SK-N-SH (cell line): ENCODE measurements at regions of chr1 and their contacts with region 1.

Region 1: DNA sequence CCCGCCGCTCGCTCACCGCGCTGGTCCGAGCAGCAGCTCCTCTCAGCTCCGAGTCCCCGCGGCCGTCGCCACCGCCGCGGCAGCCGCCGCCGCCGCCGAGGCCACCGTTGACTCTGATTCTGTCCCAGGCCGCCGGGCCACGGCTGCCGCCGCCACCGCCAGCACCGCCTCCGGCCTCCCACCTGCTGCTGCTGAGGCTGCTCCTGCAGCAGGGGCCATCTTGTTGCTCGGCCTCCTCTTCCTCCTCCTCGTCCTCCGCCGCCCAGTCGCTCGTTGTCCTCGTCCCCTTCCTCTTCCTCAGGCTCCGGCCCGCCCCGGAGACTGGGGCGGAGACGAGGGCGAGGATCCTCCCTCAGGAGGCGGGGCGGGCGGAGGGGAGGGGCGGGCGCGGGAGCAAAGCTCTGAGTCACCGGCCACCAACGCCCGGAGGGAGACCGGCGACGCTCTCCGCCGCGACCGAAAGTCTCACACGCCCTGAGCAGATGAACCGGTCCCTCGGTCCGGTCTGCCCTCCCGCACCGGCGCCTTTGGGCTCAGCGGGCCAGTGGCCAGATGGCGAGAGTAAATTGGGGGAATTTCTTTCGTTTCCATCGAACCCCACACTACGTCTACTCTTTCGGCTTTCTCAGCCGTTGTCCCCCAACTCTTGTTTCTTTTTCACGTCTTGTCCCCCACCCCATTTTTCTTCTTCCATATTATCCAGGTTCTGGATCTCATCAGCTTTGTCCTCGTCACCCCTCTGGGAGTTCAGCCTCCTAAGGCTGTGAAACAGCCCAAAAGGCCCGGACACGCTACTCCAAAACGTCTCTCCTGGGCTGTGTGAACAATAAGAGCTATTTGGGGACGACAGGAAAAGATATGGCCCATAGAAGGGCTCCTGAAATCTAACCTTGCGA is at the start of gene RC3H1:
- DNase-seq: peak; percentile 95
- H3K4me3 ChIP-seq: peak within 1 kb of the TSS; percentile 81 to 84
- H3K27ac ChIP-seq: peak within 1 kb of the TSS; percentile 91 to 95
- H3K4me1 ChIP-seq: peaks cover 1 to 35% of the 10 kb centered on the region in 2 experiments; a peak in 2 of 4 replicates
- H3K27me3 ChIP-seq: no peaks in the 10 kb centered on the region
- CTCF ChIP-seq: no peak
- EP300 ChIP-seq: no peak
- RAD21 ChIP-seq: no peak
- polyA plus RNA-seq, gene RC3H1: 2.9 and 3.3 TPM in 2 replicates

Region 2: DNA sequence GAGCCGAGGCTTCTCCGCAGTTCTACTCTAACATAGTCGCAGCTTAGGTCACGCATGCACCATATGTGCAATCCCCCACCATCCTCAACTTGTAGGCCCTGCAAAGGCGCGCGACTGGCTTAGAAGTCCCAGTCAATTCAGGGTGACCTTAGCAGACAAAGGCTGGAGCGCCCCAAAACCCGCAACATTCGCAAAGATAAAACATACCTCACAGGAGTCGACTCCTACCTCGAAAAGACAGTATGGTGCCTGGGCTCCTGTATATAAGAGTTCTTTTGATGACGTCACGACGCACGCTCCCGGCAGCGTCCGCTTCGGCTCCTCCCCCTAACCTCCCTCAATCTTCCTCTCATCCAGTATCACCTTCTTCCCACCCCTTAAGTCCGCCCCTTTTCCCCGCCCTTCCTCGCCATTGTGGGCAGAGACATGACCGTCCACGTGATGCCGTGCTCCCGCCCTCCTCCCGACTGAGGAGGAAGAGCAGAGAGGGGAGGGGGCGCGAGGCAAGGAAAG is 154.5 kb before region 1 on chr1 and contains the start of gene GAS5:
- CTCF ChIA-PET with region 1: interaction called, 3 read pairs
- POLR2A ChIA-PET with region 1: interaction called, 14 read pairs
- DNase-seq: no peak
- H3K4me3 ChIP-seq: peak within 1 kb of the TSS; percentile 82 to 90
- H3K27ac ChIP-seq: peak within 1 kb of the TSS; percentile 74 to 97
- H3K4me1 ChIP-seq: peaks cover 11 to 38% of the 10 kb centered on the region in 2 experiments; a peak in 3 of 4 replicates
- H3K27me3 ChIP-seq: no peaks in the 10 kb centered on the region
- CTCF ChIP-seq: no peak
- EP300 ChIP-seq: no peak
- RAD21 ChIP-seq: no peak
- polyA plus RNA-seq, gene GAS5: 961 and 1,422 TPM in 2 replicates

Region 3: DNA sequence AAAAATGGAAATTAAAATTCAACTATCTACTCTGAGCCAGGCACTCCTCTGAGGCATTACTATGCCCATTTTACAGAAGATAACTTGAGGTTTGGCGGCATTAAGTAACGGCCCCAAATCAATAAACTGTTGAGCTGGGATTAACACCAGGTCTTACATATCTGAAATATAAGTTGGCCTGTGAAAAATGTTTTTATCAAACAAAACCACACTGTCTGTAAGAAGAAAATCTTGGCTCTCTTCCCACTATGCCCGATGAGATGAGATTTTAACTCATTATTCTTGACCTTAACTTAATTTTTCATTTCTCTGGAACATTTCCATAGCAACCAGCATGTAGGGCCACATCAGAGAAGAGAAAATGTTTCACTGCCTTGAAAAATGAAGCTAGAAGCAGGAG is 22.0 kb before region 1 on chr1:
- CTCF ChIA-PET with region 1: no interaction called
- POLR2A ChIA-PET with region 1: interaction called, 11 read pairs
- DNase-seq: peak; percentile 70
- H3K4me3 ChIP-seq: no peak overlapping the region
- H3K27ac ChIP-seq: peak overlapping the region; percentile 84 to 85
- H3K4me1 ChIP-seq: peaks cover 10 to 36% of the 10 kb centered on the region in 2 experiments; a peak in 3 of 4 replicates
- H3K27me3 ChIP-seq: no peaks in the 10 kb centered on the region
- CTCF ChIP-seq: no peak
- EP300 ChIP-seq: peak in 1 of 2 experiments; percentile 76; a peak in 1 of 4 replicates
- RAD21 ChIP-seq: peak; percentile 10; the same call in 1 of the 2 replicates